K562 (cell line): ENCODE measurements at regions of chr7 and their contacts with region 1.

Region 1: GRCh38 chr7:16989811-16990413 is 108.1 kb upstream of the AGR3 start:
- DNase-seq: no peak
- ATAC-seq: no peak
- H3K4me3 ChIP-seq: no peak overlapping the region
- H3K27ac ChIP-seq: no peak overlapping the region
- H3K4me1 ChIP-seq: no peaks in the 10 kb centered on the region
- H3K27me3 ChIP-seq: no peaks in the 10 kb centered on the region
- CTCF ChIP-seq: no peak
- EP300 ChIP-seq: no peak
- POLR2A ChIP-seq: no peak
- RAD21 ChIP-seq: no peak

Region 2: DNA sequence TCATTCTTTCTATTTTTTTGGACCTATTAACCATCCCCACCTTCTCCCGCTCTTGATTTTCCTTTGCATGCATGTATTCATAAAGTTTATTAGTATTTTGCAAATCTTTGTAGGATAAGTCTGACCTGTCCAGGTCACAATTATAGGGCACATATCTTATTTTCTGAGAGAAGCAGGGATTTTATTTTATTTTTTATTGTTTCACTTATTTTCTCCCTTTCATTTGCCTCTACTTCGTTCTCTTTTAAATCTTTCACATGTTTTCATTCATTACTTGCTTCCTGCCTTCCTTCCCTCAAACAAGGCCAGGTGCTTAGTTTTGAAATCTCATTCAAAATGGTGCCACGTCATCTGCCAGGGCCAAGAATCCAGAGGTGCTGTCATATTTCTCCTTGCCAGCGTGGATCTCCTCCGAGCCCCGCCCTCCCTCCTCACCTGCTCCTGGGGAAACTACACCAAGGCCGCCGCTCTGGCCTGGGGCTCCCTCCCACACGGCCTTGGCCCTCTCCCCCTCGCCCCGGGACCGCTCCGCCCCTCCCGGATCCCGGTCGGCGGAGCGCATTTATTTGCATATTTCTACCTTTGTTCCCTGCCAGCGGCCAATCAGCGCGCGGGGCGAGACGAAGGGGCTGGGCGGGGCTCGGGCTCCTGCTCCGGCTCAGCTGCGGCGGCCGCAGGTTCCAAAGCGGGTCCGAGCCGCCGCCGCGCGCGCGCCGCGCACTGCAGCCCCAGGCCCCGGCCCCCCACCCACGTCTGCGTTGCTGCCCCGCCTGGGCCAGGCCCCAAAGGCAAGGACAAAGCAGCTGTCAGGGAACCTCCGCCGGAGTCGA is 236.6 kb before region 1 on chr7 and contains the start of gene TSPAN13:
- CTCF ChIA-PET with region 1: no interaction called
- POLR2A ChIA-PET with region 1: no interaction called
- in situ Hi-C with region 1: no loop called
- intact Hi-C with region 1: no loop called
- DNase-seq: peak; percentile 93 to 96 (median 94)
- ATAC-seq: peak; percentile 93
- H3K4me3 ChIP-seq: peak within 1 kb of the TSS; percentile 72
- H3K27ac ChIP-seq: peak within 1 kb of the TSS; percentile 63
- H3K4me1 ChIP-seq: peaks cover 9 to 11% of the 10 kb centered on the region in 2 experiments; a peak in 4 of 5 replicates
- H3K27me3 ChIP-seq: no peaks in the 10 kb centered on the region
- CTCF ChIP-seq: no peak
- EP300 ChIP-seq: no peak
- POLR2A ChIP-seq: peak; percentile 51; the same call in 1 of the 2 replicates
- RAD21 ChIP-seq: no peak; a peak in 1 of 4 replicates
- polyA plus RNA-seq, gene TSPAN13: 7.8 to 9.8 TPM

Region 3: DNA sequence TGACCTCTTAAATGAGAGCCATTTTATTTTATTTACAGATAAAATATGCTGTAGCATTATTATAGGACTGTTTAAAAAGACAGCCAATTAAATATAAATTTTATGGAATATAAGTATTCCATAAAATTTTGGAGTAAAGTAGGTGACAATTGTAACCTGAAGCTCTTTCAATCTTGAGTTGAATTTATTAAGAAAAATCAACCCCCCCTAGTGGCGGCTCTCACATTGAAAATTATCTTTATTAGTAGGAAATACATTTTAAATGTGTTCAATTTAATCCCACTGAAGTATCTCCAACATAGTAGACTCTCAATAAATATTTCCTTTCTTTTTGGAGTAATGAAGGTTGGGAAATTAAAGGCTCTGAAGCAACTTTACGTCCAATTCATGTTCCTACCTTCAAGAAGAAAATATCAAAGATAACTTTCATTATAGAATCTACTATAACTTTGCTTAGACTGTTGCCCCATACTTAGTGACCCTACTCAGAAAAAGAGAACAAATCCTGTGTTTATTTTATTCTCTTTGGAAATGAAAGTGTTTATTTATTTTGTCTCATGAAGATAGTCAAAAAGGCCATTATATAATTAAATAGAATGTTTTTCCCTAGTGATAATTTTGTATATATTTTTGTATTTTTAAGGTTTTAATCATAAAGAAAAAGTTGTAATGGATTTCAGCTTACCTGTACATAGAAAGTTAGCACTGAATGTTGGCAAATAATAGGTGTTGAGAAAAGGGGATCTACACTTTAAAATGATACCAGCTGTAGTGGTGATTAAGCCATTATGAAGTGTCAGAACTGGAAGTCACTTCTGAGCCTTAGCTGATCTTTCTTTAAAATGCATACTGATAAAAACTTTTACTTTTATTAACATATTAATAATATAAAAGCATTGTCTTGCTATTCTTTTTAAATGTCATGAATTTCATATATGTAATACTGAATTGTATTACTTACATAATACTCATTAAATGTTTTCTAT is 311.9 kb after region 1 on chr7:
- CTCF ChIA-PET with region 1: no interaction called
- POLR2A ChIA-PET with region 1: no interaction called
- in situ Hi-C with region 1: no loop called
- intact Hi-C with region 1: loop called (anchors 5 kb)
- DNase-seq: peak; percentile 5 to 37 (median 12)
- ATAC-seq: no peak
- H3K4me3 ChIP-seq: no peak overlapping the region
- H3K27ac ChIP-seq: no peak overlapping the region
- H3K4me1 ChIP-seq: no peaks in the 10 kb centered on the region
- H3K27me3 ChIP-seq: no peaks in the 10 kb centered on the region
- CTCF ChIP-seq: 0 out of 6 replicates have a peak, but pooled peaks of 1 of the 3 experiments have one; percentile 26
- EP300 ChIP-seq: no peak
- POLR2A ChIP-seq: no peak
- RAD21 ChIP-seq: peak in 1 of 2 experiments; percentile 50; a peak in 3 of 4 replicates